ENCODE measurements at regions of chr16 and their contacts with region 1.

Region 1: DNA sequence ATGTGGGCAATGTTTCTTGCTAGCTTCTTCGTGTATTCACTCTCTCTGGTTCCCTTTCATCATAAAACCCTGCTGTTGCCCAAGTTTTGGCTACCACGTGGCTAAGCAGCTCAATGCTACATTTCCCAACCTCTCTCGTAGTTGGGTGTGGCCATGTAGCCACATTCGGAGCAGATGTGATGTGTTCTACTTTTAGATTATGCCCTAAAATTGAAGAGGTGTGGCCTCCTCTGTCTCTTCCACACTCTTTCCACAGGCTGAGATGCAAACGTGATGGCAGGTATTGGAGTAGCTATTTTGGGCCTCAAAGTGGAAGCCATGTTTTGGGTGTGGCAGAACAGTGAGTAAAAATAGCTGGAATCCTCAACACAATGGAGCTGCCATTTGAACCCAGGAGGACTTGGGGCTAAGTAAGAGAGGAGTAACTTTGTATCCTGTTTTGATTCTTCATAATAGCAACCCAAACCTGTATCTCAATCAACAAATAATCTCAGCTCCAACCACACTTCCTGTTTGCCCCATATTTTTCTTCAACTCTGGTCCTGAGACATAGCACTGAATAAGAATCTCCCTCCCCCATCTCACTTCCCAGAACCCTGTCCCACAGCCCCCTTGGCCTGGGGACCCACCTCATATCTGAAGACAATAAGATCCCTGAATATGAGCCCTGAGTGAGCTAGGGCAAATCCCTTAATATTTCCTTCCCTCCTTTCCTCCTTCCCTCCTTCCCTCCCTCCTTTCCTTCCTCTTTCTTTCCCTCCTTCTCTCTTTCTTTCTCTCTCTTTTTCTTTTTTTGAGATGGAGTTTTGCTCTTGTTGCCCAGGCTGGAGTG is 4.0 kb downstream of the NUPR1 start:
- DNase-seq: peak in 2 of 5 donors; percentile 20 to 34
- H3K4me3 ChIP-seq: peak overlapping the region; percentile 35
- H3K4me3 Mint-ChIP-seq: peak overlapping the region in 6 of 7 donors; percentile 64 to 86 (median 68)
- H3K27ac ChIP-seq: peak overlapping the region; percentile 7
- H3K27ac Mint-ChIP-seq: peak overlapping the region; percentile 37 to 96 (median 90)
- H3K4me1 ChIP-seq: peaks cover 17% of the 10 kb centered on the region
- H3K4me1 Mint-ChIP-seq: peaks cover 39 to 53% (median 45%) of the 10 kb centered on the region in 3 donors
- H3K27me3 ChIP-seq: no peaks in the 10 kb centered on the region
- H3K27me3 Mint-ChIP-seq: peaks cover 0 to 3% of the 10 kb centered on the region in 2 donors

Region 2: GRCh38 chr16:28494121-28494851 is 40.5 kb before region 1 on chr16 and contains the start of gene APOBR:
- CTCF ChIA-PET with region 1: no interaction called
- POLR2A ChIA-PET with region 1: interaction called, 12 read pairs
- DNase-seq: peak; percentile 78 to 96 (median 95)
- H3K4me3 ChIP-seq: peak within 1 kb of the TSS; percentile 79
- H3K4me3 Mint-ChIP-seq: peak within 1 kb of the TSS; percentile 88 to 98 (median 93)
- H3K27ac ChIP-seq: peak within 1 kb of the TSS; percentile 85
- H3K27ac Mint-ChIP-seq: peak within 1 kb of the TSS; percentile 92 to 100 (median 99)
- H3K4me1 ChIP-seq: peaks cover 58% of the 10 kb centered on the region
- H3K4me1 Mint-ChIP-seq: peaks cover 57 to 70% (median 69%) of the 10 kb centered on the region in 3 donors
- H3K27me3 ChIP-seq: no peaks in the 10 kb centered on the region
- H3K27me3 Mint-ChIP-seq: no peaks in the 10 kb centered on the region
- total RNA-seq, gene APOBR: 7.7 to 8.0 TPM

Measured in CD8-positive, alpha-beta memory T cell (primary cell).